ENCODE measurements at regions of chr17 and their contacts with region 1.

Region 1: GRCh38 chr17:38868817-38869525 is 887 bp upstream of the LASP1 start:
- DNase-seq: peak; percentile 88
- H3K4me3 ChIP-seq: peak overlapping the region; percentile 74 to 93 (median 84)
- H3K27ac ChIP-seq: peak overlapping the region; percentile 24
- H3K4me1 ChIP-seq: peaks cover 38% of the 10 kb centered on the region
- H3K27me3 ChIP-seq: no peaks in the 10 kb centered on the region
- CTCF ChIP-seq: peak in 1 of 2 donors; percentile 17
- POLR2A ChIP-seq: no peak

Region 2: GRCh38 chr17:38702166-38702899 is 166.6 kb before region 1 on chr17:
- CTCF ChIA-PET with region 1: interaction called, 3 read pairs
- POLR2A ChIA-PET with region 1: no interaction called
- dilution Hi-C with region 1: no loop called
- intact Hi-C with region 1: loop called (anchors 5 kb)
- DNase-seq: peak; percentile 77
- H3K4me3 ChIP-seq: peak overlapping the region; percentile 31 to 59 (median 47)
- H3K27ac ChIP-seq: peak overlapping the region; percentile 27
- H3K4me1 ChIP-seq: peaks cover 44% of the 10 kb centered on the region
- H3K27me3 ChIP-seq: peaks cover 0 to 2% of the 10 kb centered on the region in 2 experiments
- CTCF ChIP-seq: no peak
- POLR2A ChIP-seq: peak; percentile 44

Region 3: DNA sequence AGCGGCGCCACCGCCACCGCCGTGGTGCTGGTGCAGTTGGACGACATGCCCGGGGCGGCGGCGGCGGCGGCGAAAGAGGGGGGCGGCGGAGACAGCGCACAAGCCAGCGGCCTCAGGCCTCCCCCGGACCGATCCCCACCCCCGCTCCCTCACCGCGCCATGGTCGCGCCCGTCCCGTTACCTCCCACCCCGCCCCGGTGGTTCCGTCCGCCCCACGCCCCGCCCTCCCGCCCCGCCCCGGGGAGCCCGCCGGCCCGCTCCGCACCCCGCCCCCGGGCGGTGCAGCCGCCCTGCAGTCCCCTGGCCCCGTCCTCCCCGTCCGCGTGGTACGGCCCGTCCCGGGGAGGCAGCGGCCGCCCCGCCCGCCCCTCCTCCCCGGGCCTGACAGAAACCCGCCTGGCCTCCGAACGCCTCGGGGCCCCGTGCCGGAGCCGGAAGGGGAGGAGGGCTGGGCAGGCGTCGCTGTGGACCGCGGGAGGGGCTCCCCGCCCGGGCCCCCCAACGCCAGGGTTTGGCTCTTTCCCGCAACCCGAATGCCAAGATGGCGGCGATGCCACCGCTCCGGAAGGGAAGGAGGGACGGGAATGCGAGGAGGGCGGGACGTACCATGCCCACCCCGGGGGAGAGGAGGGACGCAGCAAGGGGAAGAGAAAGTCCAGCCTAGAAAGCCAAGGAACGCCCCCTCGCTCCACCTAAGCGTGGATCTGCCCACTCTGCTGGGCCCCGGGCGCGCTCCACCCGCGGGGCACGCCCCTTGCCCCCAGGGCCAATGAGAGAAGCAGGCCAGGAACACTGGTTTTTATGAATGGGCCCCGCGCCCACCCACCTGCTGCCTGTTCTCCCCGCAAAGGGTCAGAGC is 69.4 kb before region 1 on chr17 and contains the start of gene PIP4K2B:
- CTCF ChIA-PET with region 1: interaction called, 3 read pairs
- POLR2A ChIA-PET with region 1: no interaction called
- dilution Hi-C with region 1: no loop called
- intact Hi-C with region 1: loop called (anchors 2 kb)
- DNase-seq: peak; percentile 96
- H3K4me3 ChIP-seq: peak within 1 kb of the TSS; percentile 51 to 94 (median 70)
- H3K27ac ChIP-seq: peak within 1 kb of the TSS; percentile 94
- H3K4me1 ChIP-seq: peaks cover 17% of the 10 kb centered on the region
- H3K27me3 ChIP-seq: no peaks in the 10 kb centered on the region
- CTCF ChIP-seq: no peak
- POLR2A ChIP-seq: peak; percentile 50
- total RNA-seq, gene PIP4K2B: 48.1 and 48.8 TPM in 2 replicates

Region 4: DNA sequence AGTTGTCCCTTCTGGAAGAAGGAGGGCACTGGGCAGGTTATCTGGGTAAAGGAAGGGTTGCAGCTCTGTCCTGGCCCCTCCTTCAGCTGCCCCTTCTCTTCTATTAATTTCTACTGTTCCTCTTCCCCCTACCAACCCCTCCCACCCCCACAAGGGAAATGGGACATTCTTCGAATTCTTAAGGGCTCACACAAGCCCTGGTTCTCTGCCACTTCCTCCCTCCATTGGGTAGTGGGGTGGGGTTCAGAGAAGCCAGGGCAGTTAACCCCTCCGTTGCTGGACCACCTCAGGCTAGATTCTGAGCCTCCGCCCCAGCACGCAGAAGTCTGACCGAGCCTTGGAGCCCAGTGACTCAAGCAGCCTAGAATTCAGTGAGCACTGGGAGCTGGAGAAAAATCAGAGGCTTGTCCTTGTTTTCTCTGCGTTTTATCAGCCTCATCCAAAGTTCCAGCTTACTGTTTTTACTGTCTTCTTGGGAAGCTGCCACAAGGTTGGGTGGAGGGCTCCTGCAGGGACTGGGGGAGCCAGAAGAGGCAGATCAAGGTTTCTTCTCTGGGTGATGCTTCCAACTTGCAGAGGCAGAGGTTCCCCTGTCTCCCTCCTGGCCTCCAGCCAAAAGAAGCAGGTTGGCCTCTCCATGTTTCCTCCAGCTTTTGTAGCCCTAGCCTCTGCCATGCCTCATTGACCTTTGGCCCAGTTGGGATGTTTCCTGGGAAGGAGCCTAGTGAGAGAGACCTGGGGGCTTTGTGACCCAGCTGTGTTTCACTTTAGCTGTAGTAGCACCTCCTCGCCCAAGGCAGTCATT is 11.1 kb after region 1 on chr17:
- CTCF ChIA-PET with region 1: interaction called, 5 read pairs
- POLR2A ChIA-PET with region 1: interaction called, 18 read pairs
- dilution Hi-C with region 1: no loop called
- intact Hi-C with region 1: loop called (anchors 1 kb)
- DNase-seq: peak; percentile 68
- H3K4me3 ChIP-seq: peak overlapping the region in 1 of 3 experiments; percentile 20
- H3K27ac ChIP-seq: peak overlapping the region; percentile 86
- H3K4me1 ChIP-seq: peaks cover 30% of the 10 kb centered on the region
- H3K27me3 ChIP-seq: no peaks in the 10 kb centered on the region
- CTCF ChIP-seq: no peak
- POLR2A ChIP-seq: no peak

Region 5: DNA sequence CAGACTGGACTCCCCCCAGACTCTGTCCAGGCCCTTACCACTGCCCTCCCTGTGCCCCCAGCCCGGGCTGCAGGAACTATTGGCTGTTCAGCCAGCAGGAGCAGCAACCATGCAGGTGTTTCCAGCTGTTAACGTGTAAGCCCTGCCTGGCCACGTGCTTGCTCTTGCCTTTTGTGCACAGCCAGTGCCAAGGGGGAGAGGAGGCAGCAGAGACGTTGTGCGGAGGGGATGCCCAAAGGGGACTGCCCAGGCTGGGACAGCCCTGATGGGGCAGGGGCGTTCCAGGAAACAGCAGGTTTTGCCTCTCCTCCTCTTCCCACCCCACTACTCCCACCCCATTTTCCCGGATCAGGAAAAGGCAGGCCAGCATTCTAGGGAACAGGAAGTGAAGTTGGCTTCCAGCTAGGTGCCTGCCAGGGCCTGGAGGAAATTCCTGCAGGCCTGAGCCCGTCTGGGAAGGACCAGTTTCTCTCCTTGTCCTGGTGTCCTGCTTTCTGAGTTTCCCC is 39.8 kb after region 1 on chr17:
- CTCF ChIA-PET with region 1: interaction called, 6 read pairs
- POLR2A ChIA-PET with region 1: interaction called, 10 read pairs
- dilution Hi-C with region 1: no loop called
- intact Hi-C with region 1: loop called (anchors 2 kb)
- DNase-seq: peak; percentile 56
- H3K4me3 ChIP-seq: no peak overlapping the region
- H3K27ac ChIP-seq: peak overlapping the region; percentile 24
- H3K4me1 ChIP-seq: peaks cover 32% of the 10 kb centered on the region
- H3K27me3 ChIP-seq: no peaks in the 10 kb centered on the region
- CTCF ChIP-seq: no peak
- POLR2A ChIP-seq: no peak

Region 6: DNA sequence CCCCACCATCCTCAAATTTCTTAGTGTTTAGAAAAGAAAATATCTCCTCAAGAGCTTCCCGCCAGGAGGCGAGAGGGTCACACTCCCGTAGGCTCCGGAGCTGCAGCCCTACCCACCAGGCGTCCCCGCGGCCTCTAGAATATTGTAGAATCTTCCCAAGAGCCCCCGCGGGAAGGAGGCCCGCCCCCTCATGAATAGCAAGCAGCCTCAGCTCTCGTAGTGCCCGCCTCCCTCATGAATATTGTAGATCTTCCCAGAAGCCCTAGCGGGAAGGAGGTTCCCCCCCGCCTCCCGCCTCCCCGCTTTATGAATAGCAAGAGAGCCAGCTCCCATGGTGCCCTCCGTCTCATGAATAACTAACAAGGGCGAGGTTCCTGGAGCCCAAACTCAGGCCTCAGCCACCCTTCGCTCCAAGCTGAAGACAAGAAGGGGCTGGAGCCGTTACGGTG is 98.3 kb after region 1 on chr17 and contains the start of gene FBXO47:
- CTCF ChIA-PET with region 1: interaction called, 3 read pairs
- POLR2A ChIA-PET with region 1: interaction called, 8 read pairs
- dilution Hi-C with region 1: no loop called
- intact Hi-C with region 1: loop called (anchors 1 kb)
- DNase-seq: peak; percentile 93
- H3K4me3 ChIP-seq: peak within 1 kb of the TSS in 2 of 3 experiments; percentile 24 to 34
- H3K27ac ChIP-seq: no peak within 1 kb of the TSS
- H3K4me1 ChIP-seq: no peaks in the 10 kb centered on the region
- H3K27me3 ChIP-seq: peaks cover 0 to 4% of the 10 kb centered on the region in 2 experiments
- CTCF ChIP-seq: no peak
- POLR2A ChIP-seq: peak; percentile 63
- total RNA-seq, gene FBXO47: not detected in 2 replicates